ENCODE measurements at regions of chr4 and their contacts with region 1.

Region 1: DNA sequence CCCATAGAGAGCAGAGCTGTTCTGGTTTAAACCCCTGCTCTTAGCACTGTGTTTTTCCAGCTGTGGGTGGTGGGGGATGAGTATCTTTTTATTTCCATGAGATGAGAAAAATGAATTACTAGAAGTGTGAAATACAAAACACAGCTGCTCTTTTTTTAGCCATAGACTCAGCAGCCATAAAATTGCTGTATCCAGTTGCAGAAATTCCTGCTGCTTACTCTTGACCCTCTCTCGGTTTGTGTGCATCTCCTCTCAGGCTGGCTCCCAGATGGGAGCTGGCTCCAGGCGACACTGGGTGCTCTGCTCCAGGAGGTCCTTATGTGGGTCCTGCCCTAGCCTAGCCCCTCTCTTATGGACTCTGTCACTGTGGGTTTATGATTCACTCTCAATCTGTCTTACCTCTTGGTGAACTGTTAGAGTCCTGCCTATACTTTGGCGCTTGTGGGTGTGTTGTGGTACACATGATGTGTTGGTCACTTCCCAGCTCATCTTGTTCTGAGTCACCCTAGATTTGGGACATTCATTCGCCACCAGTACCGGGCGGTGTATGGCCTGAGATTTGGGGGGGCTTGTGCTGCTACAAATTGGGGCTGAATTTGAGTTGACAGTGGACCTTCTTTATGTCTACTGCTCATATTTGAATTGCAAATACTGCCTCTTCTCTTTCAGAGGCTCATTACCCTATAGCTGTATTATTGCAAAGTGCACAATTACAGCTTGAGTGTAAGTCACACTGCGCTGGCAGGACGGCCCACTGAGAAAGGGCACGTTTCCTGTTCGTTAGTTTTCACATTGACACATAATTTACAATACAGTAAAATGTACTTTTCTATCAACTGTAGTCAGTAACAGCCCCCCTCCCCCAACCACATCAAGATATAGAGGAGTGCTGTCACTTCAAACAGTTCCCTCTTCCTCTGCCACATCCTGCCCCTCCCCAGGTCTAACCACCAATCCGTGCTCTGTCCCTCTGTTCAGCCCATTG is 46.9 kb upstream of the MSANTD1 start:
- DNase-seq: peak; percentile 63 to 90
- ATAC-seq: peak; percentile 72 to 89 (median 79)
- H3K4me3 ChIP-seq: peak overlapping the region; percentile 10
- H3K4me3 Mint-ChIP-seq: peak overlapping the region; percentile 86
- H3K27ac ChIP-seq: peak overlapping the region; percentile 89
- H3K27ac Mint-ChIP-seq: peak overlapping the region; percentile 88 to 96
- H3K4me1 ChIP-seq: peaks cover 59% of the 10 kb centered on the region
- H3K4me1 Mint-ChIP-seq: peaks cover 49 to 62% of the 10 kb centered on the region in 2 donors
- H3K27me3 ChIP-seq: no peaks in the 10 kb centered on the region
- H3K27me3 Mint-ChIP-seq: no peaks in the 10 kb centered on the region
- CTCF ChIP-seq: no peak

Region 2: GRCh38 chr4:3047464-3048286 is 154.3 kb before region 1 on chr4:
- intact Hi-C with region 1: loop called (anchors 5 kb)
- DNase-seq: peak; percentile 70 to 83
- ATAC-seq: peak; percentile 59 to 78 (median 66)
- H3K4me3 ChIP-seq: peak overlapping the region; percentile 11
- H3K4me3 Mint-ChIP-seq: peak overlapping the region; percentile 83
- H3K27ac ChIP-seq: peak overlapping the region; percentile 81
- H3K27ac Mint-ChIP-seq: peak overlapping the region; percentile 91 to 97
- H3K4me1 ChIP-seq: peaks cover 49% of the 10 kb centered on the region
- H3K4me1 Mint-ChIP-seq: peaks cover 38 to 42% of the 10 kb centered on the region in 2 donors
- H3K27me3 ChIP-seq: no peaks in the 10 kb centered on the region
- H3K27me3 Mint-ChIP-seq: no peaks in the 10 kb centered on the region
- CTCF ChIP-seq: peak; percentile 51

Region 3: DNA sequence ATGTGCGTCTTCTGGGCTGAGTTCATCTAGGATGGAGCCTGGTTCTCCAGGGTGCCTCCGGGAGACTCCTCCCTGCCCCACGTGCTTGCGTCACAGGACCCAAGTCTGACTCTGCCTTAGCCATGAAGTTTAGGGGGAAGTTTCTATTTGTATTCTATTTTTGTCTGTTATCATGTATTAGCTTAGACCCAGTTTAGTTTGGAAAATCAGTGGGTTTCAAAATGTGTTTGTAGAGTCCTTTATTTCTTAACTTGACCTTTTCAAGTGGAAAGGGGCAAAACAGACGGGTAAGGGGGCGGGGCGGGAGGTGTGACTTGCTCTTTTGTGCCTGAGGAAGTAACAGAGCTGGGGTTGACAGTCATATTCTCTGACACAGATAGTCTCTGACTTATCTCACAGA is 41.6 kb before region 1 on chr4:
- intact Hi-C with region 1: loop called (anchors 5 kb)
- DNase-seq: no peak
- ATAC-seq: peak in 2 of 3 donors; percentile 34 to 59
- H3K4me3 ChIP-seq: no peak overlapping the region
- H3K4me3 Mint-ChIP-seq: no peak overlapping the region
- H3K27ac ChIP-seq: no peak overlapping the region
- H3K27ac Mint-ChIP-seq: peak overlapping the region; percentile 61 to 71
- H3K4me1 ChIP-seq: no peaks in the 10 kb centered on the region
- H3K4me1 Mint-ChIP-seq: peaks cover 19 to 35% of the 10 kb centered on the region in 2 donors
- H3K27me3 ChIP-seq: no peaks in the 10 kb centered on the region
- H3K27me3 Mint-ChIP-seq: no peaks in the 10 kb centered on the region
- CTCF ChIP-seq: no peak

Region 4: DNA sequence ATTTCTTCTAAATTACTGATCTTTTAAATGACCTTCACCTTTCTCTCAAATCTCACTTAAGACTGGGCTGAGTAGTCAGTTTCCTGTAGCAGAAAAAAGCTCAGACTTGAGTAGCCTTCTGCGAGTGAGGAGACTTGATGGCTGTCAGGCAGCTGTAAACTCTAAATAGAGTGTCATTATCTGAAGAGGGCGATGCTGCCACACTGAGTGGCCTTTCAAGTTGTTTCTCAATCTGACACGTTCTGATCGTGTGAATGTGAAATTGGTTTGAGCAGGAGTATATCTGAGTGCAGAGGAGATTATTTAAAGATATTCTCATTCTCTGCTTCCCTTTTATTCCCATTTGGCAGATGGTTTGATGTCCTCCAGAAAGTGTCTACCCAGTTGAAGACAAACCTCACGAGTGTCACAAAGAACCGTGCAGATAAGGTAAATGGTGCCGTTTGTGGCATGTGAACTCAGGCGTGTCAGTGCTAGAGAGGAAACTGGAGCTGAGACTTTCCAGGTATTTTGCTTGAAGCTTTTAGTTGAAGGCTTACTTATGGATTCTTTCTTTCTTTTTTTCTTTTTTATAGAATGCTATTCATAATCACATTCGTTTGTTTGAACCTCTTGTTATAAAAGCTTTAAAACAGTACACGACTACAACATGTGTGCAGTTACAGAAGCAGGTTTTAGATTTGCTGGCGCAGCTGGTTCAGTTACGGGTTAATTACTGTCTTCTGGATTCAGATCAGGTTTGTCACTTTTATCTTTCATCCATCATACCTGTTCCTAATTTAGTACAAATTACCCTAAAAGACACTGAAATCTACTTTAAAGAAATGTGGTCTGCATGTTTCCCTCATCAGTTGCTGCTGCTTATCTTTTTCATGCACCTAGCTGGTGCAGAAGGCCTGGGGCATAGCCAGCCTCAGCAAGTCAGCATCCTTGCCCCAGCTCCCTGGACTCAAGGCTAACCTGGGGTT is 27.4 kb before region 1 on chr4:
- intact Hi-C with region 1: loop called (anchors 1 kb)
- DNase-seq: peak in 1 of 2 donors; percentile 24
- ATAC-seq: peak; percentile 91 to 98 (median 95)
- H3K4me3 ChIP-seq: no peak overlapping the region
- H3K4me3 Mint-ChIP-seq: peak overlapping the region; percentile 78
- H3K27ac ChIP-seq: peak overlapping the region; percentile 44
- H3K27ac Mint-ChIP-seq: peak overlapping the region; percentile 84 to 90
- H3K4me1 ChIP-seq: peaks cover 22% of the 10 kb centered on the region
- H3K4me1 Mint-ChIP-seq: peaks cover 49 to 52% of the 10 kb centered on the region in 2 donors
- H3K27me3 ChIP-seq: no peaks in the 10 kb centered on the region
- H3K27me3 Mint-ChIP-seq: no peaks in the 10 kb centered on the region
- CTCF ChIP-seq: no peak

Region 5: DNA sequence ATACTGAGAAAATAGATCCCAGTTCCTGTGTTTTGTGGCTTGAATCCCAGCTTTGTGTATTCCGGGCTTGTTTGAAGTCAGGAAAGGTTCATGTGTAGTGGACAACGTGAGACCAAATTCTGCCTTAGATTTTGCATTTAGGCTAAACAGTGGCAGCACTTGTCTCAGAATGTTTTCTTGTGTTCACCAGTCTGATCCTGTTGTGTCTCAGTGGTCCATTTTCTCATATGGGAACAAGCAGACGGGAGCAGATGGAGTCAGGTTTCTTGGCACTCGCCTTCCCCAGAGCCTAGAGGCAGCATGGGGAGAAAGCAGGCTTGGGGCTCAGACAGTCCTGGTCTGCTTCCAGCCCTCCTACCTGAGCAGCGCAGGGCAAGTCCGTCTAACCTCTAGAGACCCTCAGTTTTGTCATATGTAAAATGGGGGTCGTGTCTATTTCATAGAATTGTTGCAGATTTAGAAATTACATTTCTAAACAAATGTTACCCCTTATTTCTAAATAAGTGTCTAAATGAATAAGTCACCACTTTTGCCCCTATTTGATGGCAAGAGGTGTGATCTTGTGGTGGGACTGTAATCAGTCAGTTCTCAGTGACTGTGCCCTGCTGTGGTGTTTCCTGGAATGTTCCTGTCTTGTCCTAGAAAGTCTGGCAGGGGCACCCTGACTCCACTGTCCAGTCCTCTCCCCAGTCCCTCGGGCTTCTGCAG is 18.6 kb after region 1 on chr4:
- intact Hi-C with region 1: no loop called
- DNase-seq: no peak
- ATAC-seq: peak; percentile 49 to 63 (median 52)
- H3K4me3 ChIP-seq: no peak overlapping the region
- H3K4me3 Mint-ChIP-seq: peak overlapping the region; percentile 5
- H3K27ac ChIP-seq: no peak overlapping the region
- H3K27ac Mint-ChIP-seq: peak overlapping the region; percentile 27 to 70
- H3K4me1 ChIP-seq: peaks cover 30% of the 10 kb centered on the region
- H3K4me1 Mint-ChIP-seq: peaks cover 37 to 52% of the 10 kb centered on the region in 2 donors
- H3K27me3 ChIP-seq: no peaks in the 10 kb centered on the region
- H3K27me3 Mint-ChIP-seq: no peaks in the 10 kb centered on the region
- CTCF ChIP-seq: no peak

Region 6: DNA sequence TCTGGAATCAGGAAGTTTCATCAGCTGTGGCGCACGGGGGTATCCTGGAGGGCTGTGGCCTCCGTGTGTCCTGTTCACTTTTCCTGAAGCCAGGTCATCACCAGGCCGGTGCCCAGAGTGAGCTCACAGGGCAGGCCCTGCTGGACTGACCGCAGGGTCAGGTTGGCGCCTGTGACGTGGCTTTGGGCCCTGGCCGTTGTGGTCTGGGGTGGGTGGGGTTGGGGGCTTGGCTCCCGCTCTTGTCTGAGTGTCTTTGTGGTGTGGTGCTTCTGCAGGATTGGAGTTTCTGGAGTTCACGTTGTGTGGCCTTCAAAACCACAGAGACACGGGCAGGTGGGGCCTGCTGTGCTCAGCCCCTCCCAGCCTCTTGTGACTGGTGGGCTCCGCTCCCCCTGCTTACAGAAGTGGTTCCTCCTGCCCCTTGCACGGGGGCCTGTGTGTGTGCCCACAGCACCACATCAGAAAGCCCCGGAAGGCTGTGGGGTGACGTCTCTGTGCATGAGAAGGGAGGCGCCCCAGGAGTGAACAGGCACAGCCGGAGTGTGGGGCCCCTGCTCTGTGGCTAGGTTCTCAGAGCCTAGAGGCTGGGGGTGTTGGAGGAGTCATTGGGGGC is 100.3 kb after region 1 on chr4:
- intact Hi-C with region 1: loop called (anchors 2 kb)
- DNase-seq: peak; percentile 74 to 94
- ATAC-seq: peak; percentile 89 to 92 (median 89)
- H3K4me3 ChIP-seq: peak overlapping the region; percentile 12
- H3K4me3 Mint-ChIP-seq: peak overlapping the region; percentile 91
- H3K27ac ChIP-seq: peak overlapping the region; percentile 49
- H3K27ac Mint-ChIP-seq: peak overlapping the region; percentile 89 to 92
- H3K4me1 ChIP-seq: peaks cover 43% of the 10 kb centered on the region
- H3K4me1 Mint-ChIP-seq: peaks cover 31 to 33% of the 10 kb centered on the region in 2 donors
- H3K27me3 ChIP-seq: peaks cover 15% of the 10 kb centered on the region
- H3K27me3 Mint-ChIP-seq: peaks cover 0 to 12% of the 10 kb centered on the region in 2 donors
- CTCF ChIP-seq: no peak